B cell (primary cell): ENCODE measurements at regions of chr12 and their contacts with region 1.

Region 1: GRCh38 chr12:55642669-55643068 is 6.0 kb downstream of the OR10P1 start:
- DNase-seq: peak; percentile 62
- ATAC-seq: peak; percentile 18
- H3K4me3 ChIP-seq: peak overlapping the region in 3 of 5 experiments; percentile 8 to 41 (median 26)
- H3K4me3 Mint-ChIP-seq: peak overlapping the region; percentile 69
- H3K27ac ChIP-seq: peak overlapping the region; percentile 19 to 57
- H3K27ac Mint-ChIP-seq: peak overlapping the region; percentile 79
- H3K4me1 ChIP-seq: peaks cover 33 to 39% of the 10 kb centered on the region in 2 donors
- H3K4me1 Mint-ChIP-seq: peaks cover 36% of the 10 kb centered on the region
- H3K27me3 ChIP-seq: peaks cover 0 to 4% (median 1%) of the 10 kb centered on the region in 4 experiments
- H3K27me3 Mint-ChIP-seq: peaks cover 1% of the 10 kb centered on the region
- CTCF ChIP-seq: no peak

Region 2: DNA sequence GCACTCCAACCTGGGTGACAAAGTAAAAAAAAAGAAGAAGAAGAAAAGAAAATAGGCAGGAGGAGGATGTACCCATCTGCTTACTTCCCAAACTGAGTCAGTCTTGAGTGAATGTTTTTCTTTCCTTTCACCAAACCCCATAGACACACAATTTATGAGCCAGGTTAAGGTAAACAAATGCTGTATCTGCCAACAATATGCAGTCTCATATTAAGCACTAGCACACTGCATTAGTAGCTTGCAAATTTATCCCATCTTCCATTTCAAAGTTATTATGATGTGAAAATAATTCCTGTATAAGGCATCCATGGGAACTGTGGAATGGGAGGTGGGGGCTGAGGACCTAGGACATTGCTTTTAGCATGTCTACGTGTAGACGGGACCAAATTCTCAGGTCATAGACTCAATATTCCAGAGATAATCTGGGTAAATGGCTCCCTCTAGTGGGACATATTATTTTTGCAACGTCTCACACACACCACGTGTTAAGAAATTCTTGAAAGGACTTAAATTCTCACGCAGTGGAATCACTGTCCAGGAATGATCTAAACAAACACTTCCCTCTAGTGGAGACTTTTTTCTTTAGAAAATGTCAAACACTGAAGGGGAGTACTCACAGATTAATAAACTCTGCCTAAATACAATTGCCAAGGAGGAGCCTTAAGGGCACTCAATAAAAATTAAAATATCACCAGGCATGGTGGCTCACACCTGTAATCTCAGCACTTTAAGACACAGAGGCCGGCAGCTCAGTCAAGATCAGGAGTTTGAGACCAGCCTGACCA is 23.1 kb before region 1 on chr12:
- CTCF ChIA-PET with region 1: interaction called, 5 read pairs
- POLR2A ChIA-PET with region 1: no interaction called
- intact Hi-C with region 1: loop called (anchors 1 kb)
- DNase-seq: peak; percentile 88
- ATAC-seq: peak; percentile 88
- H3K4me3 ChIP-seq: no peak overlapping the region
- H3K4me3 Mint-ChIP-seq: no peak overlapping the region
- H3K27ac ChIP-seq: no peak overlapping the region
- H3K27ac Mint-ChIP-seq: no peak overlapping the region
- H3K4me1 ChIP-seq: peaks cover 0 to 3% of the 10 kb centered on the region in 2 donors
- H3K4me1 Mint-ChIP-seq: no peaks in the 10 kb centered on the region
- H3K27me3 ChIP-seq: peaks cover 0 to 5% (median 2%) of the 10 kb centered on the region in 4 experiments
- H3K27me3 Mint-ChIP-seq: peaks cover 30% of the 10 kb centered on the region
- CTCF ChIP-seq: peak; percentile 93

Region 3: DNA sequence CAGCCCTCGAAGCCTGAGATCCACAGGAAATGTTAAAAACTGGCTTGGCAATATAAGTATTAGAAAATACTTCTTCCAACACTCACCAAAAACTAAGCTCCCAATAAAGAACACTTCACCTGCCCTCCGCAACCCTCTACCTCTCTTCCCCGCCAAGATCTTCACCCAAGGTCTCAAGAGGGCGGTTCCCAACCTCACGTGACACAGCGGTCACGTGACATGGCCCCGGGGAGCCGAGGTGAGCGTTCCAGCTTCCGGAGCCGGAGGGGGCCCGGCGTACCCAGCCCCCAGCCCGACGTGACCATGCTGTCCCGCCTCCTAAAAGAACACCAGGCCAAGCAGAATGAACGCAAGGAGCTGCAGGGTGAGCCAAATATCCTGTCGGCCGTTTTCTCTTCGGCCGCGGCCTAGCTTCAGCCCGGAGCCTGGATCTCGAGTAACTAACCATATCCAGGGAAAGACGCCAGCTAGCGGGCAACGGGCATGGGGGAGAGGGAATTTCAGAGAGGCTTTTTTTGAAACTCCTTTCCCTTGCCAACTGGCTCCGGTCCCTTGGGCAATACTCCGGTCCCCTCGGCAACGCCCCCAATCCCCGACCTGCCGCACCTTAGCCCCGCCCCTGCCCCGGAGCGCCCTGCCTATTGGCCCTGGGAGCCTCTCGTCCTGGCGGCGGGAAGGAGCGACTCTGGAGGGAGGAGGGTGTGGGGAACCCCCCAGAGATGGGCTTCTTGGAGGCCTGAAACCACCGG is 73.3 kb after region 1 on chr12 and contains the start of gene BLOC1S1:
- CTCF ChIA-PET with region 1: interaction called, 17 read pairs
- POLR2A ChIA-PET with region 1: no interaction called
- intact Hi-C with region 1: no loop called
- DNase-seq: peak; percentile 95
- ATAC-seq: peak; percentile 95
- H3K4me3 ChIP-seq: peak within 1 kb of the TSS; percentile 86 to 98 (median 97)
- H3K4me3 Mint-ChIP-seq: peak within 1 kb of the TSS; percentile 98
- H3K27ac ChIP-seq: peak within 1 kb of the TSS; percentile 81 to 84
- H3K27ac Mint-ChIP-seq: peak within 1 kb of the TSS; percentile 99
- H3K4me1 ChIP-seq: peaks cover 16 to 30% of the 10 kb centered on the region in 2 donors
- H3K4me1 Mint-ChIP-seq: peaks cover 38% of the 10 kb centered on the region
- H3K27me3 ChIP-seq: no peaks in the 10 kb centered on the region
- H3K27me3 Mint-ChIP-seq: no peaks in the 10 kb centered on the region
- CTCF ChIP-seq: no peak
- total RNA-seq, gene BLOC1S1: 67.1 and 71.1 TPM in 2 replicates

Region 4: DNA sequence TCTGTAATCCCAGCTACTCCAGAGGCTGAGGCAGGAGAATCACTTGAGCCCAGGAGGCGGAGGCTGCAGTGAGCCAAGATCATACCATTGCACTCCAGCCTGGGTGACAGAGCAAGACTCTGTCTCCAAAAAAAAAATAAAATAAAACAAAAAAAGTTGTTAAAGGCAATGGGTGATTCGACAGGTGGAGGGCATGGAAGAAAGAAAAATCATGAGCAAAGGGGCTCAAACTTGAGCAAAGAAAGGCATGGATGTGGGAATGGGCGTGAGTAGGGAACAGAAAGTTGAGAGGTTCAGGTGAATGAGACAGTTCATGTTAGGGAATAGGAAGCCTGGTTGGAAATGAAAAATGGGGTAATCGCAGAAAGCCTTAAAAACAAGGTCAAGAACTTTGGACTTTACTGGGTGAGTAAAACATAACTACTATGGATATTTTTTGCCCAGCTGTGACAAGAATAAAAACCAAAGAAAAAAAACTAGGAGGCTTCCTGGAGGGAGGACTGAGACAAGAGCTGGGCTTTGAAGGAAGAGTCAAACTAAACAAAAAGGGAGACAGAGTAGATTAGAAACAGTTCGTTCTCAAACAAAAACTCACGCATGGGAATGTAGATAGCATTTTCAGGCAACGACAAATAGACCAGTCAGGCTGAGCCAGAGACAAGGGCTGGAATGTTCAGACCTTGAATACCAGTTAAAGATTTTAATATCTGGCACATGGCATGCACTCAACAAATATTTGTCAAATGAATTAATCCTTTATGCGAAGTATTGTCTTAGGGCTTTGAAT is 266.2 kb after region 1 on chr12:
- CTCF ChIA-PET with region 1: no interaction called
- POLR2A ChIA-PET with region 1: no interaction called
- intact Hi-C with region 1: no loop called
- DNase-seq: no peak
- ATAC-seq: no peak
- H3K4me3 ChIP-seq: no peak overlapping the region
- H3K4me3 Mint-ChIP-seq: no peak overlapping the region
- H3K27ac ChIP-seq: peak overlapping the region in 1 of 2 donors; percentile 14
- H3K27ac Mint-ChIP-seq: no peak overlapping the region
- H3K4me1 ChIP-seq: no peaks in the 10 kb centered on the region
- H3K4me1 Mint-ChIP-seq: peaks cover 10% of the 10 kb centered on the region
- H3K27me3 ChIP-seq: no peaks in the 10 kb centered on the region
- H3K27me3 Mint-ChIP-seq: no peaks in the 10 kb centered on the region
- CTCF ChIP-seq: no peak